ENCODE measurements at regions of chr1 and their contacts with region 1.

Region 1: GRCh38 chr1:62746085-62746808 is 37.7 kb upstream of the ATG4C start:
- DNase-seq: no peak
- ATAC-seq: no peak
- H3K4me3 Mint-ChIP-seq: no peak overlapping the region
- H3K27ac Mint-ChIP-seq: no peak overlapping the region
- H3K4me1 Mint-ChIP-seq: no peaks in the 10 kb centered on the region
- H3K27me3 Mint-ChIP-seq: peaks cover 7% of the 10 kb centered on the region
- CTCF ChIP-seq: peak; percentile 64

Region 2: DNA sequence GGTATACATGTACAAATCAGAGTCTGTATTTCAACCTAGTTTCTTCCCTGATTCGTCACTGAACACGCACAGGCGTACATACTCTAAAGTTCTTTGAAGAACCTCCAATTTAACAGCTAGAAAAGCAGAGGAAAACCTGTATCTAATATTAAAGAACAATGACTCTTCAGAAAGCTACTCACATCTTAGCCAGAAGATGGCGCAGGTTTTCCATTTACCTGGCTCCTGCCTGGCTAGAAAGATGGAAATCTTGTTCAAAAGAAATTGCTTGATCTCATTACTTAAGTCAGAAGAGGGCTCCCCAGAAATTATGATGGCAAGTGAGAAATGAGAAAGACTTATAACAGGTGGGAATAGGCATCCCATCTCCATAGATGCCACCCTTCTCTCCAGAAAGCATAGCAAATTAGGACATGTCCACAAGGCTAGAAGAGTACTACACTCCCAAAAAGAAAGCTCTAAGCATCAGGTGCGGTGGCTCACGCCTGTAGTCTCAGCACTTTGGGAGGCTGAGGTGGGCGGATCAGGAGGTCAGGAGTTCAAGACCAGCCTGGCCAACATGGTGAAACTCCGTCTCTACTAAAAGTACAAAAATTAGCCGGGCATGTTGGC is 570.6 kb before region 1 on chr1:
- CTCF ChIA-PET with region 1: interaction called, 11 read pairs
- POLR2A ChIA-PET with region 1: no interaction called
- intact Hi-C with region 1: no loop called
- DNase-seq: peak; percentile 55
- ATAC-seq: peak; percentile 42
- H3K4me3 Mint-ChIP-seq: no peak overlapping the region
- H3K27ac Mint-ChIP-seq: no peak overlapping the region
- H3K4me1 Mint-ChIP-seq: no peaks in the 10 kb centered on the region
- H3K27me3 Mint-ChIP-seq: peaks cover 4% of the 10 kb centered on the region
- CTCF ChIP-seq: peak; percentile 88

Region 3: DNA sequence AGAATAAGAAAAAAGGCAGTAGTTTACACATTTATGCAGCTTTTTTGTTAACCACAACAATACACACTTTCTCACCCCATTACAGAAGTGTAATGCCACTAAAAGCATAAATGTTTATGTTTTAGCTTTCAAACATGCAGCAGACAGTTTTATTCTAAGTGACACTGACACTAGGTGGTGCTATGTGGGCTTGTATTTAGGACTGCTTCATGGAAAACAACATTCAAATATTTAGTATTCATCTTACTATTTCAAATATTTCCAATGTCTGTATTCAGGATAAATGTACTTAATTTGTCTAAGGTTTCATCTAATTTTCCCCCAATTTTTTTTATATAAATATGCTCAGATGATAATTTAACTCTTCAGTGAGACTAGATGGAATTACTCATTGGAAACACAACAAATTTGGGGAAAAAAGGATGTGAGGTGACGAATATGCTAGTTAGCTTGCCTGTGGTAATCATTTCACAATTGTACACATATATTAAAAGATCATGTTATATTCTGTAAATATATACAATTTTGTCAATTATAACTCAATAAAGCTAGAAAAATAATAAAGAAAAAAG is 238.0 kb before region 1 on chr1:
- CTCF ChIA-PET with region 1: interaction called, 38 read pairs
- POLR2A ChIA-PET with region 1: no interaction called
- intact Hi-C with region 1: loop called (anchors 5 kb)
- DNase-seq: peak; percentile 8
- ATAC-seq: no peak
- H3K4me3 Mint-ChIP-seq: no peak overlapping the region
- H3K27ac Mint-ChIP-seq: no peak overlapping the region
- H3K4me1 Mint-ChIP-seq: no peaks in the 10 kb centered on the region
- H3K27me3 Mint-ChIP-seq: no peaks in the 10 kb centered on the region
- CTCF ChIP-seq: peak; percentile 55

Region 4: DNA sequence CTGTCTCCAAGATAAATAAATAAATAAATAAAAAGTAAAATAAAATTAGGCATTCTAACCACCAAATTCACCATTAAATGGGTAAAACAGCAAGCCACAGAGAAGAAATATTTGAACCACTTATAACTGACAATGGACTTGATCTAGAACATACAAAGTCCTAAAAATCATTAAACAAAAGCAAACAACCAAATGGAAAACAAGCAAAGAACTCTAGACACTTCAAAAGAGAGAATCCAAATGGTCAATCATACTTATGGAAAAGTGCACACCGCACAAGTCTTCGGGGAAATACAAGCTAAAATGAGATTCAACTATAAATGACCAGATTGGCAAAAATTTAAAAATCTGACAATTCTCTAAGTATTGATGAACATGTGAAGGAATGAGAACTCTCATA is 222.4 kb before region 1 on chr1:
- CTCF ChIA-PET with region 1: no interaction called
- POLR2A ChIA-PET with region 1: no interaction called
- intact Hi-C with region 1: loop called (anchors 5 kb)
- DNase-seq: no peak
- ATAC-seq: no peak
- H3K4me3 Mint-ChIP-seq: no peak overlapping the region
- H3K27ac Mint-ChIP-seq: no peak overlapping the region
- H3K4me1 Mint-ChIP-seq: no peaks in the 10 kb centered on the region
- H3K27me3 Mint-ChIP-seq: no peaks in the 10 kb centered on the region
- CTCF ChIP-seq: no peak

Region 5: GRCh38 chr1:62849032-62849431 is 102.8 kb after region 1 on chr1:
- CTCF ChIA-PET with region 1: no interaction called
- POLR2A ChIA-PET with region 1: no interaction called
- intact Hi-C with region 1: no loop called
- DNase-seq: no peak
- ATAC-seq: no peak
- H3K4me3 Mint-ChIP-seq: no peak overlapping the region
- H3K27ac Mint-ChIP-seq: no peak overlapping the region
- H3K4me1 Mint-ChIP-seq: no peaks in the 10 kb centered on the region
- H3K27me3 Mint-ChIP-seq: no peaks in the 10 kb centered on the region
- CTCF ChIP-seq: no peak

Measured in activated CD8-positive, alpha-beta T cell treated with anti-CD3 and anti-CD28 coated beads for 36 hours (primary cell).